ENCODE measurements at regions of chr1 and their contacts with region 1.

Region 1: GRCh38 chr1:98794196-98794886 is 132.8 kb downstream of the SNX7 start:
- DNase-seq: peak; percentile 15
- ATAC-seq: peak; percentile 96
- H3K4me3 ChIP-seq: no peak overlapping the region
- H3K27ac ChIP-seq: no peak overlapping the region
- H3K4me1 ChIP-seq: no peaks in the 10 kb centered on the region
- H3K27me3 ChIP-seq: peaks cover 0 to 2% of the 10 kb centered on the region in 2 experiments; a peak in 1 of 4 replicates
- CTCF ChIP-seq: peak; percentile 72 to 74 (median 73)
- EP300 ChIP-seq: no peak
- POLR2A ChIP-seq: no peak
- RAD21 ChIP-seq: peak; percentile 80

Region 2: DNA sequence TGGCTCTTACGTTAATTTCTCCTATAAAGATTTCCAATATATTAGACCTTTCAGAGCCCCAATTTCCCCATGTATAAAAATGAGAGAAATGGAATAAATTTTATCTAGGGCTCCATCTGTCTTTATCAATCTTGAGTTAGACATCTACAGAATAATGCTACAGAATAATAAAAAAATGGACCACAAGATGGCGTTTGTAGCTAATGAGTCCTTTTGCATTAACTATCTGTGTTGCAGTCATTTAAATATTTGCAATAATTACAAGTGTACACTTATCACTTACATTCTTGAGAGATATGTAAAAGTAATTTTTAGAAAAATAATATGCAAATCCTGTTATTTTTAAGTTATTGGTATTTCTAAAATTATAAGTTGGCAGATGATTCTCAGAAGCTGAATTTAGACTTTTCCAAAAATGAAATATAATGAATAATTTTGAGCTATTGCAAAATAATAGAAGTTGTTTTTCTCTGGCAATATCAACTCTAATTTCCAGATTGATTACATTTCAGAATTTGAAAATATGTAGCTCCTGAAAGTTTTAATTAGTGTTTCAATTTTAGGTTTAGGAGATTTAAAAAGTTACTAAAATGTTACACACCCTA is 45.1 kb before region 1 on chr1:
- CTCF ChIA-PET with region 1: interaction called, 17 read pairs
- POLR2A ChIA-PET with region 1: no interaction called
- RAD21 ChIA-PET with region 1: interaction called, 7 read pairs
- SMC1A ChIA-PET with region 1: interaction called, 11 read pairs
- in situ Hi-C with region 1: no loop called
- intact Hi-C with region 1: no loop called
- DNase-seq: no peak
- ATAC-seq: peak; percentile 59
- H3K4me3 ChIP-seq: no peak overlapping the region
- H3K27ac ChIP-seq: no peak overlapping the region
- H3K4me1 ChIP-seq: no peaks in the 10 kb centered on the region
- H3K27me3 ChIP-seq: no peaks in the 10 kb centered on the region
- CTCF ChIP-seq: peak; percentile 18 to 42 (median 22); a peak in 2 of 6 replicates
- EP300 ChIP-seq: no peak
- POLR2A ChIP-seq: no peak
- RAD21 ChIP-seq: peak; percentile 31; the same call in 1 of the 2 replicates

Region 3: DNA sequence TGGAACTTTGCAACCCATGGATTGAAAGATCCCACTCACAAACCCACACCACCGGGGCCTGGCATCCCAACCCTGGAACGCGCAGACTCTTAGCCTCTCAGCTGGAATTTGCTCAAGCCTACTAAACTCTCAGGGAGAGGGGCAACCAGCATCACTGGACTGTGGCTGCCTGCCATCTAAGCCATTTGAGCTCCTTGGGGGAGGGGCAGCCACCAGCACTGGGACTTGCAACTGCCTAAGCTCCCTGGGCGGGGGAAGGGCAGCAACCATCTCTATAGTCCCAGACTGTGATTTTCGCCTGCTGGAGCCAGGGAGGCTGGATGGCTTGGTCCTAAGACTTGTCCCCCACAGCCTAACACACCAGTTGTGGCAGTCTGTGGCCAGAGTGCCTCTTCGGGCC is 10.5 kb before region 1 on chr1:
- CTCF ChIA-PET with region 1: interaction called, 10 read pairs
- POLR2A ChIA-PET with region 1: interaction called, 6 read pairs
- RAD21 ChIA-PET with region 1: no interaction called
- SMC1A ChIA-PET with region 1: interaction called, 4 read pairs
- in situ Hi-C with region 1: no loop called
- intact Hi-C with region 1: no loop called
- DNase-seq: no peak
- ATAC-seq: no peak
- H3K4me3 ChIP-seq: no peak overlapping the region
- H3K27ac ChIP-seq: no peak overlapping the region
- H3K4me1 ChIP-seq: no peaks in the 10 kb centered on the region
- H3K27me3 ChIP-seq: no peaks in the 10 kb centered on the region
- CTCF ChIP-seq: no peak
- EP300 ChIP-seq: no peak
- POLR2A ChIP-seq: no peak
- RAD21 ChIP-seq: no peak

Region 4: GRCh38 chr1:98940722-98941079 is 146.4 kb after region 1 on chr1:
- CTCF ChIA-PET with region 1: interaction called, 6 read pairs
- POLR2A ChIA-PET with region 1: no interaction called
- RAD21 ChIA-PET with region 1: interaction called, 11 read pairs
- SMC1A ChIA-PET with region 1: interaction called, 9 read pairs
- in situ Hi-C with region 1: no loop called
- intact Hi-C with region 1: no loop called
- DNase-seq: no peak
- ATAC-seq: no peak
- H3K4me3 ChIP-seq: no peak overlapping the region
- H3K27ac ChIP-seq: no peak overlapping the region
- H3K4me1 ChIP-seq: no peaks in the 10 kb centered on the region
- H3K27me3 ChIP-seq: no peaks in the 10 kb centered on the region
- CTCF ChIP-seq: no peak
- EP300 ChIP-seq: no peak
- POLR2A ChIP-seq: no peak
- RAD21 ChIP-seq: no peak

Region 5: GRCh38 chr1:99481391-99481996 is 687.2 kb after region 1 on chr1:
- CTCF ChIA-PET with region 1: interaction called, 34 read pairs
- POLR2A ChIA-PET with region 1: no interaction called
- RAD21 ChIA-PET with region 1: interaction called, 12 read pairs
- SMC1A ChIA-PET with region 1: interaction called, 10 read pairs
- in situ Hi-C with region 1: loop called (anchors 25 kb)
- intact Hi-C with region 1: loop called (anchors 1 kb)
- DNase-seq: no peak
- ATAC-seq: peak; percentile 82
- H3K4me3 ChIP-seq: no peak overlapping the region
- H3K27ac ChIP-seq: no peak overlapping the region
- H3K4me1 ChIP-seq: no peaks in the 10 kb centered on the region
- H3K27me3 ChIP-seq: peaks cover 0 to 2% of the 10 kb centered on the region in 2 experiments; a peak in 1 of 4 replicates
- CTCF ChIP-seq: peak; percentile 62 to 71 (median 63)
- EP300 ChIP-seq: no peak
- POLR2A ChIP-seq: no peak
- RAD21 ChIP-seq: peak; percentile 87